Psoas muscle (tissue), 8 donors: ENCODE measurements at regions of chr16 and their contacts with region 1.

Region 1: DNA sequence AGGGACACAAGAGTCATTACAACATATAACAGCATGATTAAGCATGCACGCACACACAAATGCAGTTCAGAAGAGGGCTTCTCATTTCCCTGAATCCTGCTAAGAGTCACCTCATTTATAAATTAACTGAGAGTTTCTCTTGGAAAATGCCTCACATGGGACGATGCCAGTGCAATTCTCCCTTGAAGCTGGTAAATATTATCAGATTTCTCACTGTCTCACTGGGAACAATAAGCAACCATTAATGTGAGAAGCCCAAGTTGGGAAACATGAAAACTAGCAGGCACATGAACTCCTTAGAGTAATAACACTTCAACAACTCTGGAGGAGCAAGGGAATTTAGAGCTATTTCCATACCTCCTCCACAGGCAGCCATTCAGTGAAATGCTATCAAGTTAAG is 26.4 kb downstream of the SETD6 start:
- DNase-seq: no peak
- ATAC-seq: no peak
- H3K4me3 ChIP-seq: no peak overlapping the region
- H3K27ac ChIP-seq: no peak overlapping the region
- H3K4me1 ChIP-seq: no peaks in the 10 kb centered on the region
- H3K27me3 ChIP-seq: no peaks in the 10 kb centered on the region
- CTCF ChIP-seq: no peak

Region 2: DNA sequence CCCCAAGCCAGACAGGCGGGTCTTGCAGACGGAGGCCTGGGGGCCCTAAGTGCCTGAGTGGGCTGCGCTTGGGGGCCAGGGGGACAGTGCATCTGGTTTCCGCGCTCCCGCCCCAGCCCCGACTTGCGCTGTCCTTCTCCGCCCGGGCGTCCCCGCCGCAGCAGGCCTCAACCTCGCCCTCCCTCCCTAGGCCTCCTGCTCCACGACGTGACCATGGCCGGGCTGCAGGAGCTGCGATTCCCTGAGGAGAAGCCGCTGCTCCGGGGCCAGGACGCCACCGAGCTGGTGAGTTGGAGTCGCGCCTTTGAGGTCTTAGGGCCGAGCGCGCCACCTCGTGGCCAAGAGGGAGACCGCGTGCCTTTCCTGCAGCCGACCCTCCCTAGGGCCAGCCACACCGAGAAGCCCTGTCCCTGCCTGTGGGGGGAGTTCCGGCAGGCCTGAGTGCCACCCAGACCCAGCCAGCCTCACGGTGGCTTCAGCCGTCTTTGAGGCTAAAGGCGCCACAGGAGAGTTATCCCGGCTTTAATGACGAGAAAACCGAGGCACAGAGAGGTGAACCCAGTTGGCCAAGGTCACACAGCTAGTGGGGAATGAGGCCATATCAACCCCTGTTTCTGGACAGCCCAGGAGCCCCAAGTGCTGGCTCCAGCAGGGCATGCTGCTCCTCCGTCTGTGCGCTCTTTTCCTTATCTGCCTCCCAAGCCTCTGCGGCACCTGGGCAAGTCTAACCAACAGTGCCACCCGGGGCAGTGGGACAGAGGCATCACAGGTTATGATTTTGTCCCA is 54.0 kb before region 1 on chr16:
- intact Hi-C with region 1: no loop called
- DNase-seq: peak; percentile 82 to 91
- ATAC-seq: peak; percentile 88 to 97 (median 92)
- H3K4me3 ChIP-seq: peak overlapping the region; percentile 26
- H3K27ac ChIP-seq: no peak overlapping the region
- H3K4me1 ChIP-seq: no peaks in the 10 kb centered on the region
- H3K27me3 ChIP-seq: no peaks in the 10 kb centered on the region
- CTCF ChIP-seq: peak; percentile 87

Region 3: GRCh38 chr16:58582971-58583765 is 41.5 kb after region 1 on chr16:
- intact Hi-C with region 1: loop called (anchors 5 kb)
- DNase-seq: no peak
- ATAC-seq: peak in 1 of 4 donors; percentile 29
- H3K4me3 ChIP-seq: no peak overlapping the region
- H3K27ac ChIP-seq: no peak overlapping the region
- H3K4me1 ChIP-seq: no peaks in the 10 kb centered on the region
- H3K27me3 ChIP-seq: no peaks in the 10 kb centered on the region
- CTCF ChIP-seq: no peak